ENCODE measurements at regions of chr13 and their contacts with region 1.

Region 1: DNA sequence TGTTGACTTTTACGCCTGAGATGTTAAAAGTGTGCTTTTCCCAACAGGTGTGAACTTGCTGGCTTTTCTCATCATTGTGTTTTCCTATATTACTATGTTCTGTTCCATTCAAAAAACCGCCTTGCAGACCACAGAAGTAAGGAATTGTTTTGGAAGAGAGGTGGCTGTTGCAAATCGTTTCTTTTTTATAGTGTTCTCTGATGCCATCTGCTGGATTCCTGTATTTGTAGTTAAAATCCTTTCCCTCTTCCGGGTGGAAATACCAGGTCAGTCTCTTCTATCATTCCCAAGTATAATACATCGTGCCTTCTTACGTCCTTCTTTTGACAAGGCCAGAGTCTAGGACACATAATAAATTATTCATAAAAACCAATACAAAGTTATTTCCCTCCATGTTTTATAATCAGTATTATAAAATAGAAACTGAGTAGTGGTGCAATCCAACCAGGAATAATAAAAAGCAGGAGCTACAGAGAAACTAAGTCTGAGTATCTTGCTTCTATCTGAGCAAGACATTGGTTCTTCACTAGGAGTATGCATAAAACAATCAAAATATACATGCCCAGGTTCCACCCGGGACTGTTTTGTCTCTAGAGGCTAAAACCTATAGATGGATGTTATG is 57.9 kb downstream of the RXFP2 start:
- DNase-seq: peak; percentile 54
- H3K4me3 Mint-ChIP-seq: no peak overlapping the region
- H3K27ac Mint-ChIP-seq: no peak overlapping the region
- H3K4me1 Mint-ChIP-seq: peaks cover 13% of the 10 kb centered on the region
- H3K27me3 Mint-ChIP-seq: peaks cover 12% of the 10 kb centered on the region
- CTCF ChIP-seq: peak; percentile 39

Region 2: DNA sequence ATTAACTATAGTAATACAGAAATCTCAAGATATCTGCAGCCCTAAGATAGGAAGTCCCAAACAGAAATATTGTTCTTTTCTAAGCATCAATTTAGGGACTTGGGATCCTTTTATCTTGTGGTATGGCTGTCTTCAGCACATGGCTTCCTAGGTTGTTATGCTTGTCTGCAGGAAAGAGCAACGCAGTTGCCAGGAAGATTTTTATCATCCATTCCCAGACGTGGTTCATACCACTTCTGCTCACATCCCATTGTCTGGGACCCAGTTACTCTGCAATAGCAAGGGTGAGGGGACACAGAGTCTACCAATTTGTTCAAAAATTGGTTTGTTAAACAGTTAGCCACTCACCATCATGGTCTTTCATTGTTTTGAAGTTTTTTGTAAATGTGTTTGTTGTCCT is 143.5 kb before region 1 on chr13:
- CTCF ChIA-PET with region 1: no interaction called
- POLR2A ChIA-PET with region 1: no interaction called
- intact Hi-C with region 1: loop called (anchors 1 kb)
- DNase-seq: no peak
- H3K4me3 Mint-ChIP-seq: no peak overlapping the region
- H3K27ac Mint-ChIP-seq: no peak overlapping the region
- H3K4me1 Mint-ChIP-seq: no peaks in the 10 kb centered on the region
- H3K27me3 Mint-ChIP-seq: no peaks in the 10 kb centered on the region
- CTCF ChIP-seq: no peak

Region 3: GRCh38 chr13:31742097-31742734 is 55.0 kb before region 1 on chr13:
- CTCF ChIA-PET with region 1: interaction called, 5 read pairs
- POLR2A ChIA-PET with region 1: interaction called, 3 read pairs
- intact Hi-C with region 1: loop called (anchors 1 kb)
- DNase-seq: peak; percentile 73
- H3K4me3 Mint-ChIP-seq: no peak overlapping the region
- H3K27ac Mint-ChIP-seq: no peak overlapping the region
- H3K4me1 Mint-ChIP-seq: peaks cover 5% of the 10 kb centered on the region
- H3K27me3 Mint-ChIP-seq: peaks cover 16% of the 10 kb centered on the region
- CTCF ChIP-seq: peak; percentile 90

Region 4: GRCh38 chr13:32031025-32031814 is 234.0 kb after region 1 on chr13 and contains the start of gene FRY:
- CTCF ChIA-PET with region 1: no interaction called
- POLR2A ChIA-PET with region 1: no interaction called
- intact Hi-C with region 1: no loop called
- DNase-seq: peak; percentile 60
- H3K4me3 Mint-ChIP-seq: peak within 1 kb of the TSS; percentile 77
- H3K27ac Mint-ChIP-seq: no peak within 1 kb of the TSS
- H3K4me1 Mint-ChIP-seq: peaks cover 6% of the 10 kb centered on the region
- H3K27me3 Mint-ChIP-seq: no peaks in the 10 kb centered on the region
- CTCF ChIP-seq: no peak
- total RNA-seq, gene FRY: 8.9 and 9.1 TPM in 2 replicates

Measured in MCF 10A (cell line).